Activated naive CD4-positive, alpha-beta T cell treated with anti-CD3 and anti-CD28 coated beads for 36 hours (primary cell): ENCODE measurements at regions of chr1 and their contacts with region 1.

Region 1: GRCh38 chr1:66242646-66243547 is 291.1 kb upstream of the SGIP1 start:
- DNase-seq: peak; percentile 87
- H3K4me3 Mint-ChIP-seq: no peak overlapping the region
- H3K27ac Mint-ChIP-seq: no peak overlapping the region
- H3K4me1 Mint-ChIP-seq: peaks cover 30% of the 10 kb centered on the region
- H3K27me3 Mint-ChIP-seq: peaks cover 6% of the 10 kb centered on the region

Region 2: GRCh38 chr1:65235867-65236805 is 1006.8 kb before region 1 on chr1:
- CTCF ChIA-PET with region 1: interaction called, 3 read pairs
- intact Hi-C with region 1: loop called (anchors 1 kb)
- DNase-seq: no peak
- H3K4me3 Mint-ChIP-seq: no peak overlapping the region
- H3K27ac Mint-ChIP-seq: no peak overlapping the region
- H3K4me1 Mint-ChIP-seq: peaks cover 7% of the 10 kb centered on the region
- H3K27me3 Mint-ChIP-seq: peaks cover 3% of the 10 kb centered on the region

Region 3: GRCh38 chr1:65952696-65953095 is 290.2 kb before region 1 on chr1:
- CTCF ChIA-PET with region 1: interaction called, 79 read pairs
- intact Hi-C with region 1: no loop called
- DNase-seq: no peak
- H3K4me3 Mint-ChIP-seq: no peak overlapping the region
- H3K27ac Mint-ChIP-seq: no peak overlapping the region
- H3K4me1 Mint-ChIP-seq: peaks cover 12% of the 10 kb centered on the region
- H3K27me3 Mint-ChIP-seq: no peaks in the 10 kb centered on the region

Region 4: DNA sequence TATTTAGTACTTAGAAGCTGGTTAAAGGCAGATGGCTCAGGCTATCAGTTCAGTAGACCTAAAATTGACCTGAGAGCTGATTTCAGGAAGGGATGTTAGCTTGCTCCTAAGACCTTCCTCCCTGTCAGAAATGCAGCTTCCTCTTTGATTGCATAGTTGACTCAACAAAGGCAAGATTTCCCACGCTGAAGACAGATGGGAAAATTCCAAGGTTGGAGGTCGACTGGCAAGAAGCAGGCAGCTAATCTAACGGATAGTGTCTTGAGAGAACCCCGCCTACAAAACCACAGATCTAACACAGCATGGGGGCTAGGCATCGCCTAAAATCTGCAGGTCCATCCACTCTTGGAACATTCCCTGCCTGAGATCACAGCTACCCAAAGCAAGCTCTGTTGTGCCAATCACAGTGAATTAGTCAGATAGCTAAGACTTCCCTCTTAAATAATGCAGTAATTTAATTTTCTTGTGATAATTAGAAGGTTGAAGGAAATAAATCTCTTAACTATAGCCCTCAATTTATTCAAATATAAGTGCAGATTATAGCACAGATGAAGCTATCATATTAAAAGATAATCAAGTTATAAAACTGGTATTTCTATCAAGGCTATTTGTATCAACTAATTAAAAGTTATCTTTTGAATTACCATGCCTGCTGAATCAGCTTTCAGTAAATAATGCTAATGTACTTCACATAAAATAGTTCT is 66.7 kb before region 1 on chr1:
- CTCF ChIA-PET with region 1: interaction called, 42 read pairs
- intact Hi-C with region 1: no loop called
- DNase-seq: no peak
- H3K4me3 Mint-ChIP-seq: no peak overlapping the region
- H3K27ac Mint-ChIP-seq: no peak overlapping the region
- H3K4me1 Mint-ChIP-seq: peaks cover 9% of the 10 kb centered on the region
- H3K27me3 Mint-ChIP-seq: peaks cover 4% of the 10 kb centered on the region

Region 5: DNA sequence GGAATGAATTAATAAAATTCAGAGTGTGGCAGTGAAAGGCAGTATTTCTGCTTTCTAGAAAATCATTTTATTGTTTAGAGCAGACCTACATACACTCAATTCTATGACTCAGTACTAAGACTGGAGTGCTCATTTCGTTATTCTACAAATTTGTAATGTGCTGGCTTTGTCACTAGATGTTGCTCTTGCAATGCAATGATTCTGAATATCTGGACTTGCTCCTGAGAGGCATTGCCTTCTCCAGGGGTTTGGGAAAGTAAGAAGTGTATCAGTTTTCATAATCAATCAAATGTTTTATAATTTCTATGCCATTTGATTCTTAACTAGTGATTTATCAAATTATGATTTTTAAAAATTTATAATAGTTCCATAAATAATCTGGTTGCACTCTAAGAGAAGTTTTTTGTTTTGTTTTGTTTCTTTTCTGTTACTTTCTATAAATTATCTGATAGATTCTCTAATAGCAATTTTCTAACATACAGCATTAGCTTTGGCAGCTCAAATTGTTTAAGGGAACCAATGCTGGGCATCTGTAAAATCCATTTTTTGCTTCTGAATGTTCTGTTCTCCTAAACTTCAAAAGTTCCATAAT is 10.5 kb after region 1 on chr1:
- CTCF ChIA-PET with region 1: interaction called, 17 read pairs
- intact Hi-C with region 1: loop called (anchors 1 kb)
- DNase-seq: peak; percentile 39
- H3K4me3 Mint-ChIP-seq: no peak overlapping the region
- H3K27ac Mint-ChIP-seq: no peak overlapping the region
- H3K4me1 Mint-ChIP-seq: peaks cover 48% of the 10 kb centered on the region
- H3K27me3 Mint-ChIP-seq: no peaks in the 10 kb centered on the region

Region 6: GRCh38 chr1:66331657-66332547 is 89.0 kb after region 1 on chr1:
- CTCF ChIA-PET with region 1: interaction called, 16 read pairs
- intact Hi-C with region 1: loop called (anchors 1 kb)
- DNase-seq: peak; percentile 76
- H3K4me3 Mint-ChIP-seq: peak overlapping the region; percentile 98
- H3K27ac Mint-ChIP-seq: peak overlapping the region; percentile 95
- H3K4me1 Mint-ChIP-seq: peaks cover 42% of the 10 kb centered on the region
- H3K27me3 Mint-ChIP-seq: no peaks in the 10 kb centered on the region

Region 7: DNA sequence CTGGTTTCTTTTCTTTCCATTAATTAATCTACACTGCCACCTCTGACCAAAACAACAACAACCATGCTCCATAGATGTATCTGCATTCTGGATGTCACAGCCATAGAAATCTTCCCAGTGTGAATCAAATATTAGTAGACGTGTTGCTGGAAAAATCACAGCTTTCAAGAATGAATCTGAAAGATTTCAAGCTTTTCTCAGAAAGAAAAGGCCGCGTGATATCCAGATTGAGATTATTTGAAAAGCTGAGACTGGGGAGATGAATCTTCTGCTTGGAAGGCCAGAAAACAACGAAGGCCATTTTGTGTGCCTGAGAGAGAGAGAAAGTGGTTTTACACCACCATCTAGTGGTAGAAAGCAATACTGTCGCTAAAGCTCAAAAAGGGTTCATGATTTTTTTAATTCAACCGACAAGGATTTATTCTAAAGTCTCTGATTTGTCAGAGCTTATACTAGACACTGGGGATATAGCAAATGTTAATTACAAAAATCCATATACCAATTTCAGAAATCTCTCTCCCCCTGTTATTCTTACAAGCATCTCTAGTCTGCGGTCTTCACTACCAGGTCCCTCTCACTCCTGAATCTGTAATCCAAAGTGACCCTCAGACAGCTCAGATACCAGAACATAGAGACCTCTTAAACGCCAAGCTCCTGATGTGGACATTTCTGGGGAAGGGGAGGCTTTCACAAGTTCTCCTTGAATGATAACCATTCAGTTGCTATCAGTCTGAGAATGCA is 203.5 kb after region 1 on chr1:
- CTCF ChIA-PET with region 1: interaction called, 474 read pairs
- intact Hi-C with region 1: loop called (anchors 1 kb)
- DNase-seq: peak; percentile 45
- H3K4me3 Mint-ChIP-seq: peak overlapping the region; percentile 74
- H3K27ac Mint-ChIP-seq: peak overlapping the region; percentile 92
- H3K4me1 Mint-ChIP-seq: peaks cover 26% of the 10 kb centered on the region
- H3K27me3 Mint-ChIP-seq: peaks cover 5% of the 10 kb centered on the region